ENCODE measurements at regions of chr11 and their contacts with region 1.

Region 1: GRCh38 chr11:3947061-3947460 is 91.6 kb downstream of the STIM1 start:
- DNase-seq: no peak
- ATAC-seq: peak; percentile 59
- H3K4me3 Mint-ChIP-seq: peak overlapping the region; percentile 13
- H3K27ac Mint-ChIP-seq: peak overlapping the region; percentile 70
- H3K4me1 Mint-ChIP-seq: peaks cover 92% of the 10 kb centered on the region
- H3K27me3 Mint-ChIP-seq: no peaks in the 10 kb centered on the region
- CTCF ChIP-seq: no peak

Region 2: DNA sequence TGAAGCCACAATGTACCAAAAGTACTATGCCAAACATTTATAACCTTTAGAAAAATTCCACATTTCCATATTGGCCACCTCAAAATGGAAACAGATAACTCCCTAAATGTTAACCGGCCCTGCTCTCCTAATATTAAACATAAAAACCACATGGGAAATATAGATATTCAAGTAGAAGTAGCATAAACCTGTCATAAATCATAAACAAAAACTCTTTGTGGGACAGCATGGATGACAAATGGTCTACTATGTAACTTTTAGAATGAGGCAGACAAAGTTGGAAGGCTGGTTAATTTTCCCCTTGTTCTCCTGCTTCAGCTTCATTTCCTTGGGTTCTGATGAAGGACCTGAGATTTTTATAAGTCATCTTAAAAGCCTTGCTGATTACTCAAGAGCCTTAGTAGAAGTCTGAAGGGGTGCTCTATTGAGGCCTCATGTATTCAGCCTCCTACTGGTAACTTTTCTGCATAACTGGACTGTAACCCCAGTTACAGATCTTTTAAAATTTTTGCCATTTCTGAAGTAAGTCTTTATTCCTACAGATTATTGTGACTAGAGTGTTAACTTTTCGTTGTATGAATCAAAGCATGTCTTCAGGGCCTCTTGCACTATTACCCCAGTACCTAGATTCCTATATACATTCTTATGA is 24.8 kb after region 1 on chr11:
- CTCF ChIA-PET with region 1: no interaction called
- POLR2A ChIA-PET with region 1: interaction called, 3 read pairs
- intact Hi-C with region 1: loop called (anchors 2 kb)
- DNase-seq: no peak
- ATAC-seq: peak; percentile 60
- H3K4me3 Mint-ChIP-seq: no peak overlapping the region
- H3K27ac Mint-ChIP-seq: no peak overlapping the region
- H3K4me1 Mint-ChIP-seq: peaks cover 11% of the 10 kb centered on the region
- H3K27me3 Mint-ChIP-seq: no peaks in the 10 kb centered on the region
- CTCF ChIP-seq: no peak

Region 3: GRCh38 chr11:3983101-3983500 is 36.0 kb after region 1 on chr11:
- CTCF ChIA-PET with region 1: no interaction called
- POLR2A ChIA-PET with region 1: no interaction called
- intact Hi-C with region 1: no loop called
- DNase-seq: no peak
- ATAC-seq: no peak
- H3K4me3 Mint-ChIP-seq: no peak overlapping the region
- H3K27ac Mint-ChIP-seq: no peak overlapping the region
- H3K4me1 Mint-ChIP-seq: peaks cover 35% of the 10 kb centered on the region
- H3K27me3 Mint-ChIP-seq: no peaks in the 10 kb centered on the region
- CTCF ChIP-seq: no peak

Region 4: DNA sequence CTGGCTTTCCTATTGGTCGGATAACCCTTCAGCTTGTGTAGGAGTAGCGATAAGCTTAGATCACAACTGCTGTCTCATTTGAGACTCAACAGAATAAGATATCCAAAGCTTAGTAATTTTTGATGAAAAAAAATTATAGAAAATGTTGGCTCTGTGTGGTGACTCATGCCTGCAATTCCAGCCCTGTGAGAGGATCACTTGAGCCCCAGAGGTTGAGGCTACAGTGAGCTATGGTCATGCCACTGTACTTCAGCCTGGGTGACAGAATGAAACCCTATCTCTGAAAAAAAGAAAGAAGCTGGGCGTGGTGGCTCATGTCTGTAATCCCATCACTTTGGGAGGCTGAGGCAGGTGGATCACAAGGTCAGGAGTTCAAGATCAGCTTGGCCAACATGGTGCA is 92.0 kb after region 1 on chr11:
- CTCF ChIA-PET with region 1: no interaction called
- POLR2A ChIA-PET with region 1: no interaction called
- intact Hi-C with region 1: no loop called
- DNase-seq: no peak
- ATAC-seq: no peak
- H3K4me3 Mint-ChIP-seq: no peak overlapping the region
- H3K27ac Mint-ChIP-seq: no peak overlapping the region
- H3K4me1 Mint-ChIP-seq: peaks cover 11% of the 10 kb centered on the region
- H3K27me3 Mint-ChIP-seq: no peaks in the 10 kb centered on the region
- CTCF ChIP-seq: no peak

Region 5: GRCh38 chr11:4060182-4060923 is 113.3 kb after region 1 on chr11:
- CTCF ChIA-PET with region 1: no interaction called
- POLR2A ChIA-PET with region 1: interaction called, 3 read pairs
- intact Hi-C with region 1: loop called (anchors 5 kb)
- DNase-seq: no peak
- ATAC-seq: no peak
- H3K4me3 Mint-ChIP-seq: no peak overlapping the region
- H3K27ac Mint-ChIP-seq: no peak overlapping the region
- H3K4me1 Mint-ChIP-seq: peaks cover 27% of the 10 kb centered on the region
- H3K27me3 Mint-ChIP-seq: no peaks in the 10 kb centered on the region
- CTCF ChIP-seq: no peak